BJ (cell line): ENCODE measurements at regions of chr7 and their contacts with region 1.

Region 1: GRCh38 chr7:73865738-73866445 is 4.9 kb downstream of the TMEM270 start:
- DNase-seq: no peak
- H3K4me3 ChIP-seq: no peak overlapping the region
- H3K27me3 ChIP-seq: no peaks in the 10 kb centered on the region
- CTCF ChIP-seq: peak; percentile 76

Region 2: DNA sequence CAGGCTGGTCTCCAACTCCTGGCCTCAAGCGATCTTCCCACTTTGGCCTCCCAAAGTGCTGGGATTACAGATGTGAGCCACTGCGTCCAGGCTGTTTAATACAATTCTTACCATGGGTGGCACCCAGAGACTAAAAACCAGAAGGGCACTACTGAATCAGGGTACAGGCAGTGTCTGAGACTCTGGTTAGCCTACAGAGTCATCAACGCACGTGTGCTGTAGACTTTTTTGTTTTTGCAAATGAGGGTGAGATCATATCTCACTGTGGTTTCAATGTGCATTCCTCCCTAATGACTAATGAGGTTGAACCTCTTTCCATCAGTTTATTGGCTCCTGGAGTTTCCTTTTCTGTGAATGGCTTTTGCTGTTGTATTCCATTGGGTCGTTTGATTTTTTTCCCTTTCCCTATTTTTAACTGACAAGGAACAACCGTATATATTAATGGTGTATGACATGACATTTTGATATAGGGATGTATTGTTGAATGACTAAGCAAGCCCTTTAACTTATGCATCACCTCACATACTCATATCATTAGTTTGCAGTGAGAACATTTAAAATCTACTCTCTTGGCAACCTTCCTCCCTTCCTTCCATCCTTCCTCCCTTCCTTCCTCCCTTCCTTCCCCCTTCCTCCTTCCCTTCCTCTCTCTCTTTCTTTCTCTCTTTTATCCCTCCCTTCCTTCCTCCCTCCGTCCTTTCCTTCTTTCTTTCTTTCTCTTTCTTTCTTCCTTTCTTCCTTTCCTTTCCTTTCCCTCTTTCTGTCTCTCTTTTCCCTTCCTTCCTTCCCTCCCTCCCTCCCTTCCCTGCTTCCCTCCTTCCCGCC is 14.3 kb before region 1 on chr7:
- CTCF ChIA-PET with region 1: interaction called, 6 read pairs
- POLR2A ChIA-PET with region 1: interaction called, 14 read pairs
- DNase-seq: peak; percentile 95
- H3K4me3 ChIP-seq: no peak overlapping the region
- H3K27me3 ChIP-seq: no peaks in the 10 kb centered on the region
- CTCF ChIP-seq: no peak

Region 3: GRCh38 chr7:73879977-73880681 is 14.2 kb after region 1 on chr7:
- CTCF ChIA-PET with region 1: interaction called, 10 read pairs
- POLR2A ChIA-PET with region 1: no interaction called
- DNase-seq: peak; percentile 76
- H3K4me3 ChIP-seq: no peak overlapping the region
- H3K27me3 ChIP-seq: no peaks in the 10 kb centered on the region
- CTCF ChIP-seq: no peak

Region 4: DNA sequence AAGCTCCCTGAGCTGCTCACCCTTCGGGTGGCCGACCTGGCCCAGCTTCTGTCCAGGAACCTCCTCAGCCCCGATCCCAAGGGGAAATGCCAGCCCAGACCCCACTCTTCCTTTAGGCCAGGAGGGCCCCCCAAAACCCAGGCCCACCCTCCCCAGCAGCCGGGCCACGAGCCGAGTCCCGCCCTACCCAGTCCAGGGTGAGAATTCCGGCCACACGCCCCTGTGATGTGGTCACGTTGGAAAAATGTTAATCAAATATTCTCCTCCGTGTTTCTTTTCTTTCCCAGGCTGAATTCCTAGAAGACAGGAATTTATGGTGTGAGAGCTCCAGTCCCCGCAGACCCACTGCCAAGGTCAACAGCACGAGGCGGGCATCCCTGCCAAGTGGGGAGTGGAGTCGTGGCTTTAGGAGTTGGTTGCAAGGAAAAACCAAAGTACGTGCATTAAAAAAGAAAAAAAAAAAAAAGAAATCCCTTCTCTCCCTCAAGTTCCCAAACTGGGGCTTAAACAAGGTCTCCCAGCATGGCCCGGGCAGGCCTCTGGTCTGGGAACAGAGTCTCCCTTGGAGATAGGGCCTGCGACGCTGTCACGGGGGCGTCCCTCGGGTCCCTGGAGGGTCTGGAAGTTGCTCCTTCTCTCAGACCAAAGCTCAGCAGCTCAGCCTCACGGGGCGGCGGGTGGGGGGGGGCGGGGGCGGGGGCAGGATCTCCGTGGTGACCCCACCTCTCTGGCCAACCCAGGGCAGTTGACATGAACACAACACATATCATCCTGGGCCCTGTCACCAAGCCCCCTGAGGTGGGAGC is 133.9 kb after region 1 on chr7:
- CTCF ChIA-PET with region 1: no interaction called
- POLR2A ChIA-PET with region 1: interaction called, 14 read pairs
- DNase-seq: peak; percentile 94
- H3K4me3 ChIP-seq: no peak overlapping the region
- H3K27me3 ChIP-seq: no peaks in the 10 kb centered on the region
- CTCF ChIP-seq: no peak

Region 5: GRCh38 chr7:74141705-74142104 is 275.8 kb after region 1 on chr7:
- CTCF ChIA-PET with region 1: no interaction called
- POLR2A ChIA-PET with region 1: no interaction called
- DNase-seq: no peak
- H3K4me3 ChIP-seq: no peak overlapping the region
- H3K27me3 ChIP-seq: no peaks in the 10 kb centered on the region
- CTCF ChIP-seq: no peak